ENCODE measurements at regions of chr1 and their contacts with region 1.

Region 1: GRCh38 chr1:46603858-46604549 is at the start of gene MKNK1:
- DNase-seq: peak; percentile 99 to 100 (median 100)
- ATAC-seq: peak; percentile 98
- H3K4me3 ChIP-seq: peak within 1 kb of the TSS; percentile 64
- H3K27ac ChIP-seq: peak within 1 kb of the TSS; percentile 65
- H3K4me1 ChIP-seq: peaks cover 6 to 29% of the 10 kb centered on the region in 2 experiments
- H3K27me3 ChIP-seq: no peaks in the 10 kb centered on the region
- CTCF ChIP-seq: peak in 2 of 3 experiments; percentile 22 to 35; a peak in 4 of 6 replicates
- EP300 ChIP-seq: no peak
- POLR2A ChIP-seq: peak; percentile 97
- RAD21 ChIP-seq: peak; percentile 17 to 38; a peak in 1 of 4 replicates
- polyA plus RNA-seq, gene MKNK1: 44.7 to 46.0 TPM

Region 2: GRCh38 chr1:46589529-46589928 is 14.5 kb before region 1 on chr1:
- CTCF ChIA-PET with region 1: no interaction called
- POLR2A ChIA-PET with region 1: interaction called, 20 read pairs
- in situ Hi-C with region 1: no loop called
- intact Hi-C with region 1: no loop called
- DNase-seq: no peak
- ATAC-seq: no peak
- H3K4me3 ChIP-seq: no peak overlapping the region
- H3K27ac ChIP-seq: no peak overlapping the region
- H3K4me1 ChIP-seq: 0 out of 5 replicates have a peak, but pooled peaks cover 0 to under 1% of the 10 kb centered on the region in 2 experiments
- H3K27me3 ChIP-seq: no peaks in the 10 kb centered on the region
- CTCF ChIP-seq: no peak
- EP300 ChIP-seq: no peak
- POLR2A ChIP-seq: no peak
- RAD21 ChIP-seq: no peak

Region 3: GRCh38 chr1:46616277-46617107 is 12.5 kb after region 1 on chr1 and contains the start of gene MOB3C:
- CTCF ChIA-PET with region 1: no interaction called
- POLR2A ChIA-PET with region 1: interaction called, 38 read pairs
- in situ Hi-C with region 1: no loop called
- intact Hi-C with region 1: no loop called
- DNase-seq: peak; percentile 77 to 89 (median 87)
- ATAC-seq: peak; percentile 86
- H3K4me3 ChIP-seq: peak within 1 kb of the TSS; percentile 72
- H3K27ac ChIP-seq: peak within 1 kb of the TSS; percentile 63
- H3K4me1 ChIP-seq: peaks cover 20 to 44% of the 10 kb centered on the region in 2 experiments
- H3K27me3 ChIP-seq: no peaks in the 10 kb centered on the region
- CTCF ChIP-seq: no peak
- EP300 ChIP-seq: no peak
- POLR2A ChIP-seq: peak; percentile 67
- RAD21 ChIP-seq: no peak
- polyA plus RNA-seq, gene MOB3C: 1.0 to 1.1 TPM

Measured in K562 (cell line).